IMR-90 (cell line): ENCODE measurements at regions of chr4 and their contacts with region 1.

Region 1: GRCh38 chr4:128454281-128455075 is 166.9 kb upstream of the PGRMC2 start:
- DNase-seq: peak; percentile 97
- ATAC-seq: peak; percentile 95
- H3K4me3 ChIP-seq: peak overlapping the region; percentile 10; the same call in 1 of the 2 replicates
- H3K27ac ChIP-seq: peak overlapping the region; percentile 77
- H3K4me1 ChIP-seq: peaks cover 20% of the 10 kb centered on the region
- H3K27me3 ChIP-seq: no peaks in the 10 kb centered on the region
- CTCF ChIP-seq: peak; percentile 95
- POLR2A ChIP-seq: peak; percentile 44; the same call in 1 of the 2 replicates
- RAD21 ChIP-seq: peak; percentile 98

Region 2: DNA sequence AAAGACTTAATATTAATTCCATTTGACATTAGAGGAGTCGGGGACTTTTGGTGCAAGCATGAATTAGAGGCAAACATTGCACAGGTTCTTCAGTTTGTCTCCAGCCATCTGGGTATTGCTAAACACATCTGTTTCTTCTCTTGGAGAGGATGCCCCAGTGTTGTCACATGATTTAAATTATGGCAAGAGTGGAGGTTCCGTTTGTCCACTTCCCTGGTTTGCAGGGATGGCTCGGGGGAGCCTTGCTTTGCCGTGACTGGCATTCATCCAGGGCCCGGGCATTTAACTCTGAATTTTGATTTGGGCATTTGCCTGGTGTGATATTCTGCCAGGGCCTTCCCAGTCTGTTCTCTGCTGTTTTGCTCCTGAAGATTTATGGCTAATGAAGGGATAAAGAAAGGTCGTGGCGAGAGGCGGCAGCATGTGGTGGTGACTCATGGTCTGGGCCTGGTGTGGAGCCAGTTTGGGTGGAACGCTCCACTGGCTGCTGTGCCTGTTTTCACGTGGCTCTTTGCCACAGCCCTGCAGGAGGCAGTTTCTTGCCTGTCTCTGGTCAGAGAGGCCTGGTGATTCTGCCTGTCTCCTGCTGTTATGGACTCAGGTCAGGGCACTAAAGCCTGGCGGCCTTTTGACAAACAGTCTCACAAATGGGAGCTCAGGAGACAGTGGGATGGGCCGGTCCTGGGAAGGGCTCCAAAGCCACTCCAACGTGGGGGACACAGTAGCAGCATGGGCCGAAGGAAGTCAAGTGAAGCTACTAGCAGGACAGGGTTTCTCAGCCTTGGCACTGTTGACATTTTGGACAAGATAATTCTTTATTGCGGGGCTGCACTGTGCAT is 67.5 kb before region 1 on chr4:
- CTCF ChIA-PET with region 1: no interaction called
- POLR2A ChIA-PET with region 1: no interaction called
- dilution Hi-C with region 1: no loop called
- in situ Hi-C with region 1: no loop called
- intact Hi-C with region 1: loop called (anchors 5 kb)
- DNase-seq: peak; percentile 97
- ATAC-seq: peak; percentile 68
- H3K4me3 ChIP-seq: no peak overlapping the region
- H3K27ac ChIP-seq: peak overlapping the region; percentile 91
- H3K4me1 ChIP-seq: peaks cover 34% of the 10 kb centered on the region
- H3K27me3 ChIP-seq: no peaks in the 10 kb centered on the region
- CTCF ChIP-seq: 0 out of 2 replicates have a peak, but pooled peaks have one; percentile 18
- POLR2A ChIP-seq: peak; percentile 53
- RAD21 ChIP-seq: peak; percentile 29

Region 3: DNA sequence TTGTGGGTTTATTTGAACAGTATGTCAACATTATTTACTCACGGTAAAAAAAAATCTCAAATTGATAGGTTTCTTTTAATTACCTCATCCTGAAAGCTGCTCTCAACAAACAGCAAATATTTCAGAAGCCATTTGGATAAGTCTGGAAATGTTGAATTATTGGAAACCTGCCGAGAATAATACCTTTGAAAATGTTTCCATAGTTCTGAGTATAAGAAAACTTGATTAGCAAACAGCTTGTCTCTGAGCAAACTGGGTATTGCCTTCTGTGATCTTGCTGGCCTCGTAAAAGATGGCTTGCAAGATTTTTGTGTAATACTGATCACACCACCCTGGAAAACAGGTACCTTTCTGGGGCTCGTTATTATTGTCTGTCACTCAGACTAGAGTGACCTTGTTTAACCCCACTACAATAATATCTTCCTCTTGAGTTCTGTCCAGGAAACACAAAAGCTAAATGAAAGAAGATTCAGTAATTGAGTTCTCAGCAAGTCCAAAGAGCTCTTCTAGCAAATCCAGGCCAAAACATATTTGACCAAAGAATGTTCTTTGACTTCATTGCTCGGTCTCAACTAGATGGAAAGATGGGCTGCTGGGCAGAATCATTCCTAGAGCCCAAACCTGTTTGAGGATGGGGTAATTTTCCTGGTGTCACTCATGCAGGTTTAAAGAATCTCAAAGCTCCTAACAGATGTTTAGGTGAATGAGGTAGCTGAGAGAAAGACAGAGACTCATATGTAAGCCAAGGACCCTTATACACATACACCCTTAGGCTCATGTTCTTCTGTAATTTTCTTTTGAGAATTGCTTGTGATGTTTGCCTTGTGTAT is 99.4 kb after region 1 on chr4:
- CTCF ChIA-PET with region 1: interaction called, 6 read pairs
- POLR2A ChIA-PET with region 1: no interaction called
- dilution Hi-C with region 1: no loop called
- in situ Hi-C with region 1: no loop called
- intact Hi-C with region 1: loop called (anchors 1 kb)
- DNase-seq: no peak
- ATAC-seq: no peak; the same call in 1 of the 2 replicates
- H3K4me3 ChIP-seq: peak overlapping the region; percentile 53; the same call in 1 of the 2 replicates
- H3K27ac ChIP-seq: peak overlapping the region; percentile 88; the same call in 1 of the 2 replicates
- H3K4me1 ChIP-seq: peaks cover 14% of the 10 kb centered on the region
- H3K27me3 ChIP-seq: no peaks in the 10 kb centered on the region
- CTCF ChIP-seq: no peak
- POLR2A ChIP-seq: no peak
- RAD21 ChIP-seq: no peak

Region 4: GRCh38 chr4:128653517-128654444 is 199.3 kb after region 1 on chr4:
- CTCF ChIA-PET with region 1: no interaction called
- POLR2A ChIA-PET with region 1: no interaction called
- dilution Hi-C with region 1: no loop called
- in situ Hi-C with region 1: no loop called
- intact Hi-C with region 1: loop called (anchors 10 kb)
- DNase-seq: peak; percentile 70
- ATAC-seq: peak; percentile 93
- H3K4me3 ChIP-seq: no peak overlapping the region
- H3K27ac ChIP-seq: no peak overlapping the region
- H3K4me1 ChIP-seq: peaks cover 7% of the 10 kb centered on the region
- H3K27me3 ChIP-seq: no peaks in the 10 kb centered on the region
- CTCF ChIP-seq: no peak
- POLR2A ChIP-seq: no peak
- RAD21 ChIP-seq: no peak

Region 5: GRCh38 chr4:129093191-129093920 is 638.9 kb after region 1 on chr4 and contains the start of gene SCLT1:
- CTCF ChIA-PET with region 1: no interaction called
- POLR2A ChIA-PET with region 1: no interaction called
- dilution Hi-C with region 1: no loop called
- in situ Hi-C with region 1: no loop called
- intact Hi-C with region 1: loop called (anchors 5 kb)
- DNase-seq: peak; percentile 99
- ATAC-seq: peak; percentile 96
- H3K4me3 ChIP-seq: peak within 1 kb of the TSS; percentile 87
- H3K27ac ChIP-seq: peak within 1 kb of the TSS; percentile 86
- H3K4me1 ChIP-seq: no peaks in the 10 kb centered on the region
- H3K27me3 ChIP-seq: no peaks in the 10 kb centered on the region
- CTCF ChIP-seq: no peak
- POLR2A ChIP-seq: peak; percentile 93
- RAD21 ChIP-seq: no peak
- total RNA-seq, gene SCLT1: 7.7 and 15.3 TPM in 2 replicates